Head of caudate nucleus (tissue), 42 donors: ENCODE measurements at regions of chr1 and their contacts with region 1.

Region 1: GRCh38 chr1:185317034-185317885 is at the start of gene IVNS1ABP:
- DNase-seq: peak; percentile 90 to 98 (median 96)

Region 2: GRCh38 chr1:185044981-185045813 is 272.1 kb before region 1 on chr1 and contains the start of gene RNF2:
- intact Hi-C with region 1: loop called (anchors 10 kb)
- DNase-seq: peak; percentile 54 to 92 (median 83)

Region 3: DNA sequence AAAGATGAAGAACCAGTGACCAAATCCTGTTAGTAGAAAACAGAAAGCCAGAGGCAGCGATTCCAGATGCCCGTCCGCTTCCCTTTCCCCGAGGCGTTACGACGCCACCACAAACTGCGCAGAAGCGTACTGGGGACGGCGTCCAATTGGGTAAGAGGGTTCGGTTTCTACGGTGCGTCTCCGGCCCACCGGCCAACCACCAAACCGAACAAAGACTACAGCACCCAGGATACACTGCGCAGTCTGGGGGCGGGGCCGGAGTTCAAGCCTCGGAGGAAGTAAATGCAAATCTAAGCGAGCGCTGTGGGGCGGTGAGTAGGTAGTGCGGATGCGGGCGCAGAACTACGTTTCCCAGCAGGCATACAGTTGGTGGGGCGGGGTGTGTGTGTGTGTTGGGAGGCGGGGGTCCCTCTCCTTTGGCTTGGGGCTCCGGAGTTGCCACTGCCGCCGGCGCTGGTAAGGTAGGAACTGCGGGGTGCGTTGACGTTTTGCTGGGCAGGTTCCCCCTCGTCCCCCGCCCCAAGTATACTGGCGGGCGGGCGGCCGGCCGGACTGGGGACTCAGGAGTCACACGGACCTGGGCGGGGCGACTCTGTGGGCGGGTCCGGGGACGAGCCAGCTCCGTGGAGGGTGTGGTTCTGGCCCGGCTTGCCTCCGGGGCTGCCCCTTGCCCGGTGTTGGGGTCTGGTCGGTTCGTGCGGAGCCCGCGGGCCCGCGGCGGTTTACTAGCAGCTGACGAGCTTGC is 160.2 kb before region 1 on chr1 and contains the starts of genes SWT1 and TRMT1L:
- intact Hi-C with region 1: loop called (anchors 2 kb)
- DNase-seq: peak; percentile 99 to 100 (median 100)

Region 4: GRCh38 chr1:185559684-185560331 is 242.5 kb after region 1 on chr1:
- intact Hi-C with region 1: loop called (anchors 10 kb)
- DNase-seq: peak in 31 of 42 donors; percentile 8 to 69 (median 40)

Region 5: DNA sequence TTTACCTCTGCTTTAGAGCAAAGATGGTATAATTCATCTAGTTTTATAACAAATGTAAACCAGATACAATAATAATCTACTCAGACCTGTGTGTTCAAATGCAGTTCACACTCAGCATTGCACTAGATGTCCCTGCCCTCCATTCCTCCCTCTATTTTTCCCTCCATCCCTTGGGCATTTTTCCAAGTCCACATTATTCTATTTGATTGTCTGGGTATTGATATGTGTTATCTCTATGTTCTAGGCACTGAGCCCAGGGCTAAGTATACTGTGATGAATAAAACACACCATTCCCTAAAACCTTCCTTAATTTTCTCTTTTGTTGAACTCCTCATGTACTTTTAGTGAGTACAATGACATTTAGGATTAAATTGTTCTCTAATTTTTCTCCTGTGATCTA is 350.8 kb after region 1 on chr1:
- intact Hi-C with region 1: loop called (anchors 5 kb)
- DNase-seq: no peak

Region 6: GRCh38 chr1:186375088-186375953 is 1058.1 kb after region 1 on chr1 and contains the starts of genes ODR4 and TPR:
- intact Hi-C with region 1: loop called (anchors 10 kb)
- DNase-seq: peak; percentile 94 to 99 (median 97)